HCT116 (cell line): ENCODE measurements at regions of chr2 and their contacts with region 1.

Region 1: GRCh38 chr2:20635675-20636584 is 15.0 kb downstream of the HS1BP3 start:
- DNase-seq: peak; percentile 21
- ATAC-seq: peak; percentile 98
- H3K4me3 ChIP-seq: no peak overlapping the region
- H3K27ac ChIP-seq: no peak overlapping the region
- H3K4me1 ChIP-seq: peaks cover 9 to 18% of the 10 kb centered on the region in 2 experiments; a peak in 3 of 4 replicates
- H3K27me3 ChIP-seq: no peaks in the 10 kb centered on the region
- CTCF ChIP-seq: peak; percentile 92 to 96 (median 94)
- POLR2A ChIP-seq: no peak
- RAD21 ChIP-seq: peak; percentile 100

Region 2: DNA sequence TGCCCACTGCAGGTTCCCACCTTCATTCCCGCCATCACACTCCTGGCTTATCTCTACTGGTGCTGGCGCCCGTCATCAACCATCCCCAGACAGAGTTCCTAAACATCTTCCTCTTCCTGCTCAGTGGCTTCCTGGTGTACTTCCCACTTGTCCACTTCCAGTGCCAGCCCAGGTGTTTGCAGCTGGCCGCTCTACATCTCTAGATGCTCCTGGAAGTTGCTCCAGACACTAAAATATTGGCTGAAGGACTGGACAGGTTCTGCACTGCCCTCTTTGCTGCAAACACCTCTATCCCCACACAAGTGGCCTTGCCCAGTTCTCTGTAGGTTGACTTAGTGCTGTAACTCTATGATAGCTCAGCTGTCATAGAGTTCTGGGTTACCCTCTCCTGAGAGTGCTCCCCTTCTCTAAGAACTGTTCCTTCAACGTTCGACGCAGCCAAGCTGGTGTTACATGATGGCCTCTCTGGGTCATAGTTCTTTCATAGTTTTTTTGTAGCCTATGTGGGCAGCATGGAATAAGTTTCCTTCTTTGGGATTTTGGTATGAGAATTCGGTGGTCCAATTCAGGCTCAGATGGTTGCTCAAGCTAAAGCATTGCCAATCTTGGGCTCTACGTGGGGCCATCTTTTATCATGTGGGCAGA is 239.5 kb before region 1 on chr2:
- CTCF ChIA-PET with region 1: interaction called, 17 read pairs
- POLR2A ChIA-PET with region 1: no interaction called
- RAD21 ChIA-PET with region 1: interaction called, 6 to 8 read pairs
- intact Hi-C with region 1: loop called (anchors 1 kb)
- DNase-seq: no peak
- ATAC-seq: no peak; the same call in 1 of the 2 replicates
- H3K4me3 ChIP-seq: no peak overlapping the region
- H3K27ac ChIP-seq: no peak overlapping the region
- H3K4me1 ChIP-seq: peaks cover 0 to 19% of the 10 kb centered on the region in 2 experiments; a peak in 2 of 4 replicates
- H3K27me3 ChIP-seq: no peaks in the 10 kb centered on the region
- CTCF ChIP-seq: no peak
- POLR2A ChIP-seq: no peak
- RAD21 ChIP-seq: no peak